ENCODE measurements at regions of chr17 and their contacts with region 1.

Region 1: DNA sequence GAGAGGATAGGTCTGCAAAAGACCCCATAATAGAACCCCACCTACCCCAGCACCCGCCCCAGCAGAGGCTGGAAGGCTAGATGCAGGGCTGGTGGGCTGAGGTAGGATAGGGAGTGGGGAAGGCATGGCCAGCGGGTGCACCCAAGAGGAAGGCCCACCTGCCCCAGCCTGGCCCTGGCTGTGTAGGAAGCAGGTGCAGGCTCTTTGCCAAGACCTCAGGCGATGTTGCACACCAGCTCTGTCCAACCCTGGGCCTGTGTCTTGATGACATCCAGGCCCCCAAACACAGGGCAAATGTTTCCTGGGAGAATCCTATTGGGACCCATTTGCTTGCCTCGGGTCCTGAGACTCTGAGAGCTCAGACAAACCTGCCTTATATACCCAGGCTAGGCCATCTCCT is 12.2 kb downstream of the UNC119 start:
- DNase-seq: no peak
- H3K4me3 ChIP-seq: no peak overlapping the region
- H3K27ac ChIP-seq: no peak overlapping the region
- H3K4me1 ChIP-seq: no peaks in the 10 kb centered on the region
- H3K27me3 ChIP-seq: no peaks in the 10 kb centered on the region

Region 2: DNA sequence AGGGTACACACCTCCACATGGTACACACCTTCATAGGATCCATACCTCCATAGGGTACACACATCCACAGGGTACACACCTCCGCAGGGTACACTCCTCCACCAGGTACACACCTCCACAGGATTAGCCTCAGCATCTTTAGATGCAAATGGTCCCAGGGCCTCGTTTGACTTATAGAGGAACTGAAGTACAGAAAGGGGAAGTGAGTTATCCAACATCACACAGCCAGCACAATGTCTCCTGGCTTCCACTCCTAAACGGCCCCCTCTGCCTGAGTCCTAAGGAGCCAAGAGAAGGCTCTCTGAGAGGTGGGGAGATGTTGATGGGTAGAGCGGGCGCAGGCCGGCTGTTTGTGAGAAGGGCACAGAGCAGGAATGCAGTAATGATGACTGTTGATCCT is 22.1 kb before region 1 on chr17:
- CTCF ChIA-PET with region 1: interaction called, 19 read pairs
- POLR2A ChIA-PET with region 1: interaction called, 7 read pairs
- DNase-seq: peak; percentile 29 to 88 (median 83)
- H3K4me3 ChIP-seq: no peak overlapping the region
- H3K27ac ChIP-seq: no peak overlapping the region
- H3K4me1 ChIP-seq: peaks cover 0 to 26% (median 22%) of the 10 kb centered on the region in 4 experiments
- H3K27me3 ChIP-seq: no peaks in the 10 kb centered on the region

Region 3: DNA sequence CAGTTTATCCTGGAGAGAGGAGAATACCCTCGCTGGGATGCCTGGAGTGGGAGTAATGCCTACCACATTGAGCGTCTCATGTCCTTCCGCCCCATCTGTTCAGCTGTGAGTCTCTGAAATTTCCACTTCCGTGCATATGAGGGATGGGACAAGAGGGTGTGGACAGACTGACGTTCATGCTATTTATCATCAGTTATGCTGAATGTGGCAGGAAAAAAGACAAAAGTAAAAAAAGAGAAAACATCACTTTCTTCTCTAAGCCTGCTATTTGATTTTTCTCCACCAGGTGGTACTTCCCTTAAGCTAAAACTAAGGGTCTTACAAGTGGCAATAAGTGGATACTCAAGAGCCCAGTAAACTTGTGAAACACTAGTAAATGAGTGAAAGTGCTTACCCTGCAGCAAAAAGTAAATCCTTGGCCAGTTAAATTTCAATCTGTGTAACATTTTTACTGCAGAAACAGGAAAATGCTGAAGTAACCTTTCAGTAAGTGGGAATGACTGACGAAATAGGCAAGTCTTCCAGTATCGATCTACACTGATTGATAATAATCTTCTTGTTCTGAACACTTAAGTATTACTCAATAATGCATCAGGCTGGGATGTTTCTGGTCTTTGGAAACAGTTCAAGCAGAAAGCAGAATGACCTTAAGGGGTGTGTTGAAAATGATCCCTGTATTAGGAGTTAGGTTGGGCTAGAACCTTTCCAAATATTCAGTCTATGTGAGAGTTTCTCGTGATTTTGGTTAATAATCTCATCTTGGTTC is 712.1 kb after region 1 on chr17:
- CTCF ChIA-PET with region 1: no interaction called
- POLR2A ChIA-PET with region 1: no interaction called
- DNase-seq: peak; percentile 38 to 66 (median 65)
- H3K4me3 ChIP-seq: no peak overlapping the region
- H3K27ac ChIP-seq: no peak overlapping the region
- H3K4me1 ChIP-seq: no peaks in the 10 kb centered on the region
- H3K27me3 ChIP-seq: no peaks in the 10 kb centered on the region